Gastrocnemius medialis (tissue), 4 donors: ENCODE measurements at regions of chr5 and their contacts with region 1.

Region 1: DNA sequence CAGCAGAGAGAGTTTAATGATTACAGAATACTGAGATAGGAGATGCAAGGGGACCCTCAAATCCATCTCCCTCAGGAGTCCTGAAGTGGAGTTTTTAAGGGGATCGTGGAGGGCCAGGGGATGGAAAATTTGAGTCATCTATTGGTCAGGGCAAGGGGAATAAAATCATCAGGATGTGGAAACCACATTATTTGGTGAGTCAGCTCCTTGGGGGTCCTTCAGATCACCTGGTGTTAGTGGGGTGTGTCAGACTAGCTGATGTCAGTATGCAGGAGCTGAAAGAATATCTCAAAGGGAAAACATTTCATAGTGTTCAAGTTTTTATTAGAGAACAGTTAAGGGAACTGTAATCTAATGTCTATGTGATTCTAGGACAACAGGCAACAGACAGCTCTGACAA is 183.0 kb upstream of the FTMT start:
- DNase-seq: no peak
- ATAC-seq: no peak
- H3K4me3 ChIP-seq: no peak overlapping the region
- H3K27ac ChIP-seq: no peak overlapping the region
- H3K4me1 ChIP-seq: no peaks in the 10 kb centered on the region
- H3K27me3 ChIP-seq: no peaks in the 10 kb centered on the region
- CTCF ChIP-seq: no peak
- POLR2A ChIP-seq: no peak

Region 2: DNA sequence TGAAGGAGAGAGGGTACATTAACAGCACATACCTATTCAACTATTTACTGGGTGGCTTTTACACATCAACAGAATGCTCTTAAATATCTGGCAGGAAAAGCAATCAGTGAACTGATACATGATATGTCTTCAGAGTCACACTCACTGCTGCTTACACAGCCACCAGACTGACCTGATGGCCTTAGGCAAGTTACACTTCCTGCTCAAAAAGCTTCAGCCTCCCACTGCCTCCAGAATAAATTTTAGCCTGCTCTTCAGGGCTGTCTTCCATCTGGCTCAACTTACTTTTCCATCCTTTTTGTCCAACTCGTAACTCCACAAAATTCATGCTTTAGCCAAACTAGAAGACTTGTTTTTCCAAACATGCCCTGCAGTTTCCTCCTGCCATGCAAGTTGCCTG is 398.8 kb after region 1 on chr5:
- in situ Hi-C with region 1: no loop called
- intact Hi-C with region 1: loop called (anchors 5 kb)
- DNase-seq: no peak
- ATAC-seq: no peak
- H3K4me3 ChIP-seq: no peak overlapping the region
- H3K27ac ChIP-seq: no peak overlapping the region
- H3K4me1 ChIP-seq: no peaks in the 10 kb centered on the region
- H3K27me3 ChIP-seq: no peaks in the 10 kb centered on the region
- CTCF ChIP-seq: no peak
- POLR2A ChIP-seq: no peak